BJ (cell line): ENCODE measurements at regions of chrX and their contacts with region 1.

Region 1: GRCh38 chrX:118156254-118156952 is 39.8 kb upstream of the KLHL13 start:
- DNase-seq: no peak
- H3K4me3 ChIP-seq: no peak overlapping the region
- H3K27me3 ChIP-seq: no peaks in the 10 kb centered on the region
- CTCF ChIP-seq: no peak

Region 2: DNA sequence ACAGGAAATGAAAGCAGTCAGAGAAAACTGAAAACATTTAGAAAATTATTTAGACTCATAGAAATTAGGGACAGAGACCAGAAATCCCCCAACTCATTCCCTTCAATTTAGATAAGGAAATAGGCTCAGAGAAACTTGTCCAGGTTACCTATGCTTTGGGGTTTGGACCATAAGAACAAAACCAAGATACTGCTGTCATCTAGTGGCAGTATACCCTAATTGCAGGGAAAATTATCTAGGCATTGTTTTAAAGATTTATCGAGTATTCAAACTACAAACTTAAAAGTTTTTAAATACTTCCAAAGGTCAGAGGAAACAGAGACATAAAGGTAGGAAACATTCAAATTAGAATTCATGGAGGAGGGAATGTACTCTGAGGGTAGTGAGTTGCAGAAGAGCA is 27.2 kb after region 1 on chrX:
- CTCF ChIA-PET with region 1: no interaction called
- POLR2A ChIA-PET with region 1: interaction called, 14 read pairs
- DNase-seq: no peak
- H3K4me3 ChIP-seq: no peak overlapping the region
- H3K27me3 ChIP-seq: no peaks in the 10 kb centered on the region
- CTCF ChIP-seq: no peak

Region 3: DNA sequence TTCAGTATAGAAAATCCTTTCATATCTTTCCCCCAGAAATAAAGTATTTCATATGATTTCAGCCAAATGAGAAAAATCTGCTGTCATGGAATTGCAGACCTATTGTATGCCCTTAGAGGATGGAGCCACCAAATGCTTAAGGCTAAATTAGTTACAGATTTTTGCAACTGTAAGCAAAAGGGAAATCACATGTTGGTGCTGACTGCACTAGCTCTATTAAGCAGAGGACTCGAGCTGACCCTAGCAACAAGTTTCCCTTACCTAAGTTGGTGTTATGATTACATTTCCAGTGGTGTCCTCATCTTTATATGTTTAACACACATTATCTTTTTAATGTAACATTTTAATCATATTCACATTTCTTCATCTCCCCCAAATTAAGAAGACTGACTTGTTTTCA is 280.9 kb after region 1 on chrX:
- CTCF ChIA-PET with region 1: no interaction called
- POLR2A ChIA-PET with region 1: no interaction called
- DNase-seq: no peak
- H3K4me3 ChIP-seq: no peak overlapping the region
- H3K27me3 ChIP-seq: no peaks in the 10 kb centered on the region
- CTCF ChIP-seq: no peak

Region 4: GRCh38 chrX:118724775-118725174 is 568.4 kb after region 1 on chrX:
- CTCF ChIA-PET with region 1: no interaction called
- POLR2A ChIA-PET with region 1: no interaction called
- DNase-seq: no peak
- H3K4me3 ChIP-seq: no peak overlapping the region
- H3K27me3 ChIP-seq: no peaks in the 10 kb centered on the region
- CTCF ChIP-seq: no peak